MCF 10A (cell line): ENCODE measurements at regions of chr3 and their contacts with region 1.

Region 1: DNA sequence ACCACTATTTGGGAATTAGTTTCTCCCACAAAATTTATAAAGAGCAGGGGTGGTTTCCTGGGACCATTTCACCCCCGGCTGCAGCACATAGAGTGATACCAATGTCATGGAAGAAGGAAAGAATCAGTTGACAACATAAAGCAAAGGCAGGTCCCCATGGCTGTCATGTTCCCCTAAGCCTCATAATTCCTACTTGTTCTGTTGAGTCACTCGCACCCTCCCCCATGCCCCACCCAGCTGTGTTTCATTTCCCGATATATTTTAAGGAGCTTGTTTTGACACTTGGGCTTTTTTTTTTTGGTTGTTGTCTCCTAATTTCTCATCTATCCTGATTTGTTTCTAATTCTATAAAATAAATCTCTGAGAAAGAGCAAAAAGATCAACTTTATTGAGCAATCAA is 24.9 kb downstream of the ERC2 start:
- DNase-seq: no peak
- H3K4me3 Mint-ChIP-seq: no peak overlapping the region
- H3K27ac Mint-ChIP-seq: no peak overlapping the region
- H3K4me1 Mint-ChIP-seq: peaks cover 6% of the 10 kb centered on the region
- H3K27me3 Mint-ChIP-seq: no peaks in the 10 kb centered on the region
- CTCF ChIP-seq: no peak

Region 2: DNA sequence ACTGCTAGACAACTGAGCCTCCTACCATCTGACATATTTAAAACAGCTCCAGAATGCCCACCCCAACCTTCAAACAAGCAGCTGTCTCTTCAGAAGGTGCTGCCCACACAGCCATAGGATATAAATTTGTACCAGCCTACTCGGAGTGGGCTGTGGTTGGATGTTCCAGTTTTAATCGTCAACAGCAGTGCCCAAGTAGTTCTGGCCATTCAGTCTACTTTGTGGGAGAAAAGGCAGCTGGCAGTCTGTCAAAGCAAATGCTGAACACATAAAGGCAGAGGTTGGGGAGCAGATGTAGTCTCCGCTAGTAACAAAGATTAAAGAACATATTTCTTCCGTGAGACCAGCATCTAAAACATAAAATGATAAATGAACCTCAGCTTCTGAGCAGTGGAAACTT is 40.8 kb after region 1 on chr3:
- CTCF ChIA-PET with region 1: interaction called, 14 read pairs
- POLR2A ChIA-PET with region 1: no interaction called
- intact Hi-C with region 1: no loop called
- DNase-seq: no peak
- H3K4me3 Mint-ChIP-seq: no peak overlapping the region
- H3K27ac Mint-ChIP-seq: no peak overlapping the region
- H3K4me1 Mint-ChIP-seq: no peaks in the 10 kb centered on the region
- H3K27me3 Mint-ChIP-seq: peaks cover 67% of the 10 kb centered on the region
- CTCF ChIP-seq: no peak

Region 3: GRCh38 chr3:56556908-56557830 is 113.8 kb after region 1 on chr3 and contains the start of gene CCDC66:
- CTCF ChIA-PET with region 1: no interaction called
- POLR2A ChIA-PET with region 1: no interaction called
- intact Hi-C with region 1: no loop called
- DNase-seq: peak; percentile 92
- H3K4me3 Mint-ChIP-seq: peak within 1 kb of the TSS; percentile 100
- H3K27ac Mint-ChIP-seq: peak within 1 kb of the TSS; percentile 97
- H3K4me1 Mint-ChIP-seq: peaks cover 13% of the 10 kb centered on the region
- H3K27me3 Mint-ChIP-seq: peaks cover 43% of the 10 kb centered on the region
- CTCF ChIP-seq: peak; percentile 64
- total RNA-seq, gene CCDC66: 28.6 and 34.5 TPM in 2 replicates